B cell (primary cell): ENCODE measurements at regions of chr14 and their contacts with region 1.

Region 1: DNA sequence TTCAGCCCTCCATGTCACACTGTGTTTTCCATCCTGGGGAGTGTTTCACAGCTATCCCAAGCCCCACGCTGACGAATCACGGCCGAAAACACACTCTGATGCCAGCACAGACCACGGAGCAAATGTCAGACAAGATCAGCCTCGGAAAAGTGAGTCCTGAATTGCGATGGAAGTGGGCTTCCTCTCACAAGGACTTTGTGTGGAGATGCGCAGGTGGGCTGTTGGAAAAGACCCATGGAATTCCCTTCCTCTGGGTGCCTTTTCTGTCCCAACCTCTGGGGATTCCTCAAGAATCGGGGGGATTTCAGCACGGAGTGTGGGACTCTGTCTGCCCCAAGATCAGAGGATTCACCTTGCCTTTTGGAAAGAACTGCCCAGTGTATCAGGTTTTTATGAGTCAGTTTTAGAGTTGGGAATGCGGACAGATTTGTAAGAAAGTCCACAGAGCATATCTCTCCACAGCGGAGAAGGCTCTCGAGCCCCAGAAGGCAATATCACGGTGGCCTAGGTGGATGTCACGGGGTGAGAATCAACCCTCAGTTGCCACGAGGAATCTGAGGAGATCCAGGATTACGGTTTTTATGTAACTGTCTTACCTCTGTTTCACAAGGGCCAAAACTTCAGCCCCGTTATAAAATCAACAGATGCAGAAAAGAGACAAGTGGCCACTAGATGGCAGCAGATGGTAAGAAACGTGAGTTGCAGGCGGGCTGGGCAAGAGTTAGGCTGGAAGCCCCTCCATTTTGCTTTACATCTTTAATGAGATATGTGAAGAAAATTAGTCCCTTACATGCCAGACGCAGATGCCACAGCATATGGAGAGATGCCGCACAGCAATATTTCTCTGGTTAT is 201.9 kb downstream of the DAD1 start:
- DNase-seq: peak; percentile 91
- ATAC-seq: peak; percentile 34
- H3K4me3 ChIP-seq: no peak overlapping the region
- H3K4me3 Mint-ChIP-seq: peak overlapping the region; percentile 69
- H3K27ac ChIP-seq: no peak overlapping the region
- H3K27ac Mint-ChIP-seq: peak overlapping the region; percentile 12
- H3K4me1 ChIP-seq: peaks cover 38 to 49% of the 10 kb centered on the region in 2 donors
- H3K4me1 Mint-ChIP-seq: peaks cover 82% of the 10 kb centered on the region
- H3K27me3 ChIP-seq: no peaks in the 10 kb centered on the region
- H3K27me3 Mint-ChIP-seq: no peaks in the 10 kb centered on the region
- CTCF ChIP-seq: peak; percentile 83

Region 2: GRCh38 chr14:22319526-22320361 is 67.4 kb before region 1 on chr14:
- CTCF ChIA-PET with region 1: interaction called, 24 read pairs
- POLR2A ChIA-PET with region 1: no interaction called
- intact Hi-C with region 1: no loop called
- DNase-seq: peak; percentile 69
- ATAC-seq: peak; percentile 70
- H3K4me3 ChIP-seq: no peak overlapping the region
- H3K4me3 Mint-ChIP-seq: no peak overlapping the region
- H3K27ac ChIP-seq: no peak overlapping the region
- H3K27ac Mint-ChIP-seq: no peak overlapping the region
- H3K4me1 ChIP-seq: no peaks in the 10 kb centered on the region
- H3K4me1 Mint-ChIP-seq: peaks cover 3% of the 10 kb centered on the region
- H3K27me3 ChIP-seq: no peaks in the 10 kb centered on the region
- H3K27me3 Mint-ChIP-seq: peaks cover 5% of the 10 kb centered on the region
- CTCF ChIP-seq: peak; percentile 87

Region 3: DNA sequence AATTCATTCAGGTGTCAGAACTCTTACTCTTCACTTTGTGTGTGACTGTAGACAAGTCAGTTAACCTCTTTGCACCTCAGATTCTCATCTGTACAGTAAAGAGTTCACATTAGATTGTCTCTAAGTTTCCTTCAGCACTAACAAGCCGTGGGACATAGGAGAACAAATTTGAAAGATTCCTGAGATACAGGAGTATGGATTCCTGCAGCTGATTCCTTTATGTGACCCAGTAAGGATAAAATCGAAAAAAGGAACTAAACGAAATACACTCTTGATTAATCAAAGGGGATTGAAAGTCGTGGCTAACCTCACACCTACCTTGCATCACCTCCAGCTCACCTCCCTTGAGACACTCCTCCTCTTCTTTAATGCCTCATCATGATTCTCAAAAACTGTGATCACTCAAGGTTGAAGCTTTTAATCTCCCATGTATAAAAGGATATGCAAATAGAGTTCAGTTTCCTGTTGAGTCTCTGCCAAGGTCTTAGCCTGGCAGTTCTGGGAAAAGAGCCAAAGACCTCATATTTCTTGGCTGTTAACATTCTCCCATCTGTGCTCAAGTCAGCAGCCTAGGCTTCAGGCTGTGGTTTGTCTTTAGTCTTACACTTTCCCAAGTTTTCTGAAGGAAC is 45.3 kb after region 1 on chr14:
- CTCF ChIA-PET with region 1: interaction called, 4 read pairs
- POLR2A ChIA-PET with region 1: no interaction called
- intact Hi-C with region 1: loop called (anchors 5 kb)
- DNase-seq: peak; percentile 48
- ATAC-seq: peak; percentile 83
- H3K4me3 ChIP-seq: no peak overlapping the region
- H3K4me3 Mint-ChIP-seq: peak overlapping the region; percentile 55
- H3K27ac ChIP-seq: no peak overlapping the region
- H3K27ac Mint-ChIP-seq: peak overlapping the region; percentile 39
- H3K4me1 ChIP-seq: peaks cover 25 to 29% of the 10 kb centered on the region in 2 donors
- H3K4me1 Mint-ChIP-seq: peaks cover 35% of the 10 kb centered on the region
- H3K27me3 ChIP-seq: peaks cover 0 to 37% (median 21%) of the 10 kb centered on the region in 4 experiments
- H3K27me3 Mint-ChIP-seq: peaks cover 24% of the 10 kb centered on the region
- CTCF ChIP-seq: no peak

Region 4: GRCh38 chr14:22466491-22466890 is 79.3 kb after region 1 on chr14:
- CTCF ChIA-PET with region 1: interaction called, 161 read pairs
- POLR2A ChIA-PET with region 1: no interaction called
- intact Hi-C with region 1: no loop called
- DNase-seq: no peak
- ATAC-seq: no peak
- H3K4me3 ChIP-seq: no peak overlapping the region
- H3K4me3 Mint-ChIP-seq: no peak overlapping the region
- H3K27ac ChIP-seq: no peak overlapping the region
- H3K27ac Mint-ChIP-seq: peak overlapping the region; percentile 16
- H3K4me1 ChIP-seq: peaks cover 30 to 48% of the 10 kb centered on the region in 2 donors
- H3K4me1 Mint-ChIP-seq: peaks cover 62% of the 10 kb centered on the region
- H3K27me3 ChIP-seq: no peaks in the 10 kb centered on the region
- H3K27me3 Mint-ChIP-seq: no peaks in the 10 kb centered on the region
- CTCF ChIP-seq: no peak

Region 5: DNA sequence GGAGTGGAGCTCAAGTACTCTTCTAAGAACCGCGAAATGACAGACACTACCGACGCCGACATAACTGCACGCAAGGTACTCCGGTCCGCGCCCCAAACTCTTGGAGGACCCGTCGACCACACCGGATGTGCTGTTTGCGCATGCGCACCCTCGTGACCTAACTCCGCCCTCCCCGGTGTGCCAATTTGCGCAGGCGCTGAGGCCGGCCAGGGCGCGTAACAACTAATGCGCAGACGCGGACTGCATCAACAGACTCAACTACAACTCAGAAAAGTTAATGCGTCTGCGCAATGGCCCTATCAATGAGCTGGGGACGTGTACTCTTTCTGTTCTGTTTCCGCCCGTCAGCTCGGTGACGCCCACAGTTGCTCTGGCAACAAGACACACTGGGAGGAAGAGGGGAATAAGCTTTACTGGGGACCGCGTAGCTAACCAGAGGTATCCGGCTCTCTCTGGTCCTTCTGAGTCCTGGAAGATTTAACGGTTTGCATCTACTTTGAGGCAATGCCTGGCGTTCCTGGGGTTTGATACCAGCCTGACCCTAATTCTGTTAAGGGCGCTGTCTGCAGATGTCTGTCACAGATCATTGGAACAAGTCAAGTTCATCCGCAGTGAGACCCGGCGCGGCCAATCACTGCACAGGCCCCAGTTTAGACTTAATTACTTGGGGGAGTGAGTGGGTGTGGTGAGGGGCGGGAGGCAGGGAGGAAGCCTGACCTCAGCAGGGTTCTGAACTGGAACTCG is 202.1 kb after region 1 on chr14 and contains the start of gene DAD1:
- CTCF ChIA-PET with region 1: interaction called, 16 read pairs
- POLR2A ChIA-PET with region 1: interaction called, 3 read pairs
- intact Hi-C with region 1: no loop called
- DNase-seq: peak; percentile 100
- ATAC-seq: peak; percentile 89
- H3K4me3 ChIP-seq: peak within 1 kb of the TSS; percentile 75 to 84 (median 78)
- H3K4me3 Mint-ChIP-seq: peak within 1 kb of the TSS; percentile 99
- H3K27ac ChIP-seq: peak within 1 kb of the TSS; percentile 97
- H3K27ac Mint-ChIP-seq: peak within 1 kb of the TSS; percentile 96
- H3K4me1 ChIP-seq: peaks cover 30% of the 10 kb centered on the region in 2 donors
- H3K4me1 Mint-ChIP-seq: peaks cover 53% of the 10 kb centered on the region
- H3K27me3 ChIP-seq: no peaks in the 10 kb centered on the region
- H3K27me3 Mint-ChIP-seq: peaks cover 2% of the 10 kb centered on the region
- CTCF ChIP-seq: no peak
- total RNA-seq, gene DAD1: 76.1 and 77.4 TPM in 2 replicates

Region 6: GRCh38 chr14:23057757-23058653 is 670.9 kb after region 1 on chr14:
- CTCF ChIA-PET with region 1: interaction called, 3 read pairs
- POLR2A ChIA-PET with region 1: no interaction called
- intact Hi-C with region 1: loop called (anchors 10 kb)
- DNase-seq: peak; percentile 89
- ATAC-seq: peak; percentile 64
- H3K4me3 ChIP-seq: peak overlapping the region; percentile 11 to 91 (median 68)
- H3K4me3 Mint-ChIP-seq: peak overlapping the region; percentile 95
- H3K27ac ChIP-seq: no peak overlapping the region
- H3K27ac Mint-ChIP-seq: peak overlapping the region; percentile 76
- H3K4me1 ChIP-seq: peaks cover 10 to 21% of the 10 kb centered on the region in 2 donors
- H3K4me1 Mint-ChIP-seq: peaks cover 18% of the 10 kb centered on the region
- H3K27me3 ChIP-seq: peaks cover 0 to 6% (median 0%) of the 10 kb centered on the region in 4 experiments
- H3K27me3 Mint-ChIP-seq: no peaks in the 10 kb centered on the region
- CTCF ChIP-seq: peak; percentile 95